ENCODE measurements at regions of chr10 and their contacts with region 1.

Region 1: DNA sequence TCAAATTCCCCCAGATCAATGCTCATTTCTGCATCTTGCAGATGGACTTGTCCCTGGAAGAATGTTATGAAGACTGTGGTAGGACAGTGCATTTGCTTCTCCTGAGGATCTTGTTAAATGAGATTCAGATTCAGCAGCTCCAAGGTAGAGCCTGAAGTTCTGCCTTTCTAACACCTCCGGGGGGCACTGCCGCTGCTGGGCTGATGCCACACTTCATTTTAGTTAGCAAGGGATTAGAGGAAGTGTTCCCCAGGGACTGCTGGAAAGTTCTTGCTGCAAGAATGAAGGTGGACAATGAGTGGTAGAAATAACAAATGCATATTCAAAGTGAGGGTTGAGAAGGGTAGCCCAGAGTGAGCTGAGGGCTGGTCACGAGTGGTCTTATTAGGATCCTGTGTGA is 434.3 kb upstream of the AKR1E2 start:
- DNase-seq: no peak
- H3K4me3 Mint-ChIP-seq: no peak overlapping the region
- H3K27ac Mint-ChIP-seq: no peak overlapping the region
- H3K4me1 Mint-ChIP-seq: no peaks in the 10 kb centered on the region
- H3K27me3 Mint-ChIP-seq: peaks cover 17% of the 10 kb centered on the region

Region 2: GRCh38 chr10:4488904-4489303 is 97.2 kb after region 1 on chr10:
- intact Hi-C with region 1: loop called (anchors 5 kb)
- DNase-seq: no peak
- H3K4me3 Mint-ChIP-seq: no peak overlapping the region
- H3K27ac Mint-ChIP-seq: no peak overlapping the region
- H3K4me1 Mint-ChIP-seq: no peaks in the 10 kb centered on the region
- H3K27me3 Mint-ChIP-seq: peaks cover 18% of the 10 kb centered on the region

Measured in activated T-helper 1 cell treated with anti-CD3 and anti-CD28 coated beads, Interleukin-12 subunit alpha, Interleukin-12 subunit beta, Interleukin-2, Interleukin-4 antibody, amounts not matched to agents 30 ng/mL and 10 ng/mL and 1 ng/mL, durations not matched to agents 14 hours and 24 hours and 36 hours (primary cell).